ENCODE measurements at regions of chr1 and their contacts with region 1.

Region 1: GRCh38 chr1:67500413-67500959 is 70.3 kb upstream of the SERBP1 start:
- DNase-seq: peak; percentile 55
- ATAC-seq: peak; percentile 100
- H3K4me3 ChIP-seq: no peak overlapping the region
- H3K27ac ChIP-seq: no peak overlapping the region
- H3K4me1 ChIP-seq: peaks cover 3% of the 10 kb centered on the region; the same call in 1 of the 2 replicates
- H3K27me3 ChIP-seq: 0 out of 4 replicates have a peak, but pooled peaks cover 0 to 2% of the 10 kb centered on the region in 2 experiments
- CTCF ChIP-seq: peak; percentile 97 to 99 (median 99); a peak in 5 of 6 replicates
- EP300 ChIP-seq: no peak
- POLR2A ChIP-seq: no peak
- RAD21 ChIP-seq: peak; percentile 100

Region 2: DNA sequence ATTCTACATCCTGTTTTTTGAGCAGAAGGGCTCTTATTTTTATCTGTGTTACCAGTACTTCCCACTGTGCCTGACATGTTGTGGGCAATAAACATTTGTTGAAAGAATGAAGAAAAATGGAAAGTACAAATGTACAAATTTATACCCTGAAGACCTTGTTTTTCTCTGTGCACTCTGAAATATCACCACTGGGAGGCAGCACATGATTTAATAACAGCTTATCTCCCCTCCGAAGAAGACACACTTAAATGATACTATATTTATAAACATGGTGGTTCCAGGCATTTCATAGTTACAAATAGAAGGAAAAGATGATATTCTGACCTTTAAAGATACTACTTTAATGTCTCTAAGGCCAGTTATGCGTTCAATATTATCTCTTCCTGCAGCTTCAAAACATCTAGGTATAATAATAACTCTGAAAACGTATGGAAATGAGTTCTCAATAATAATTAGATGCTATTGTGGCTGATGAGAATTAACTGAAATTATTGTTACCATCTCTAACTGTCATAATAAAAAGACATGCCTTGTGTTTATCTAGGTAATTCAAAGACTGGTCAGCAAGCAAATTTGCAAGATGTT is 735.4 kb before region 1 on chr1:
- CTCF ChIA-PET with region 1: interaction called, 5 read pairs
- POLR2A ChIA-PET with region 1: no interaction called
- RAD21 ChIA-PET with region 1: interaction called, 11 read pairs
- SMC1A ChIA-PET with region 1: interaction called, 3 read pairs
- in situ Hi-C with region 1: loop called (anchors 25 kb)
- intact Hi-C with region 1: loop called (anchors 5 kb)
- DNase-seq: no peak
- ATAC-seq: peak; percentile 80
- H3K4me3 ChIP-seq: no peak overlapping the region
- H3K27ac ChIP-seq: no peak overlapping the region
- H3K4me1 ChIP-seq: no peaks in the 10 kb centered on the region
- H3K27me3 ChIP-seq: no peaks in the 10 kb centered on the region
- CTCF ChIP-seq: peak; percentile 50 to 75 (median 69)
- EP300 ChIP-seq: no peak
- POLR2A ChIP-seq: no peak
- RAD21 ChIP-seq: peak; percentile 85

Region 3: GRCh38 chr1:67005068-67005467 is 495.4 kb before region 1 on chr1:
- CTCF ChIA-PET with region 1: interaction called, 3 read pairs
- POLR2A ChIA-PET with region 1: no interaction called
- RAD21 ChIA-PET with region 1: no interaction called
- SMC1A ChIA-PET with region 1: no interaction called
- in situ Hi-C with region 1: no loop called
- intact Hi-C with region 1: loop called (anchors 5 kb)
- DNase-seq: no peak
- ATAC-seq: no peak
- H3K4me3 ChIP-seq: no peak overlapping the region
- H3K27ac ChIP-seq: no peak overlapping the region
- H3K4me1 ChIP-seq: no peaks in the 10 kb centered on the region
- H3K27me3 ChIP-seq: no peaks in the 10 kb centered on the region
- CTCF ChIP-seq: no peak
- EP300 ChIP-seq: no peak
- POLR2A ChIP-seq: no peak
- RAD21 ChIP-seq: no peak

Region 4: GRCh38 chr1:67239738-67240137 is 260.7 kb before region 1 on chr1:
- CTCF ChIA-PET with region 1: interaction called, 36 read pairs
- POLR2A ChIA-PET with region 1: no interaction called
- RAD21 ChIA-PET with region 1: interaction called, 30 read pairs
- SMC1A ChIA-PET with region 1: interaction called, 17 read pairs
- in situ Hi-C with region 1: no loop called
- intact Hi-C with region 1: loop called (anchors 1 kb)
- DNase-seq: peak; percentile 9
- ATAC-seq: no peak
- H3K4me3 ChIP-seq: no peak overlapping the region
- H3K27ac ChIP-seq: no peak overlapping the region
- H3K4me1 ChIP-seq: no peaks in the 10 kb centered on the region
- H3K27me3 ChIP-seq: no peaks in the 10 kb centered on the region
- CTCF ChIP-seq: no peak
- EP300 ChIP-seq: no peak
- POLR2A ChIP-seq: no peak
- RAD21 ChIP-seq: no peak

Region 5: DNA sequence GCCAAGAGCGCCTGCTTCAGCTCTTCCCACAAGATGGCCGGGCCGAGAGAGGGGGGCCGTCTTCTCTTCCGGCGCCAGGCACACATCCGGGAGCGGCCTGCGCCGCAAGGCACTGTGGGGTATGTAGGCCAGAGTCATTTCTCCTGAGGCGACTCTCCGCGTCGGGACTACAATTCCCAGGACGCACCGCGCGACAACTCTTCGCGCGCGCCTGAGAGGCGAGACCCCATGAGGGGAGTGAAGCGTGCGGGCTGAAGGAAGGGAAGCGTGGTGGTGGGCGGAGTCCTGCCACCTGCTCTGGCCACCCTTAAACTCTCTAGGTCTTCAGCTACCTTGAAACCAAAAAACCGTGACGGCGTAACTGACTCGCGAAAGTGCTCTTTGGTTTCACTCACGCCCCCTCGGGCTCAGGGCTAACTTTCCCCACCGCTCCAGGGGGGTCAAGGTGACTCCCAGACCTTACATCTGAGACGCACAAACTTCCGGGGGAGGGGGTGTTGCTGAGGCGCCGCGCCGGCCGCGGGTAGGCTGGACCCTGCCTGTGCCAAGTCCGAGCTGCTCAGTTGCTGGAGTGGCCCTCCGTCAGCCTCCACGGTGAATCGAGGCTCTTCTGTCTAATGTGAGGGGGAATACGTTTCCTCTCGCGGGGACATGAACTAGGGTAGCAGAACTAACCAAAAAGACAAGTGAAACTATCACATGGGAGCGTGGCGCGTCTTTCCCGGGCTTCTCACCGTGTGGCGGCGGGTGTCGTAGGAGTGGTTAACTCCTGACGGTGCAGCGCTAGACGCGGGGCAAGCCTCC is 69.9 kb before region 1 on chr1 and contains the start of gene SERBP1:
- CTCF ChIA-PET with region 1: interaction called, 11 read pairs
- POLR2A ChIA-PET with region 1: no interaction called
- RAD21 ChIA-PET with region 1: interaction called, 7 read pairs
- SMC1A ChIA-PET with region 1: interaction called, 8 read pairs
- in situ Hi-C with region 1: no loop called
- intact Hi-C with region 1: loop called (anchors 1 kb)
- DNase-seq: peak; percentile 98
- ATAC-seq: peak; percentile 86
- H3K4me3 ChIP-seq: peak within 1 kb of the TSS; percentile 91
- H3K27ac ChIP-seq: peak within 1 kb of the TSS; percentile 96
- H3K4me1 ChIP-seq: peaks cover 15% of the 10 kb centered on the region
- H3K27me3 ChIP-seq: no peaks in the 10 kb centered on the region
- CTCF ChIP-seq: no peak
- EP300 ChIP-seq: peak in 1 of 2 experiments; percentile 50; a peak in 2 of 4 replicates
- POLR2A ChIP-seq: peak; percentile 59
- RAD21 ChIP-seq: no peak
- polyA plus RNA-seq, gene SERBP1: 76.7 to 111 TPM

Region 6: GRCh38 chr1:67441183-67441582 is 59.3 kb before region 1 on chr1:
- CTCF ChIA-PET with region 1: no interaction called
- POLR2A ChIA-PET with region 1: no interaction called
- RAD21 ChIA-PET with region 1: no interaction called
- SMC1A ChIA-PET with region 1: no interaction called
- in situ Hi-C with region 1: no loop called
- intact Hi-C with region 1: no loop called
- DNase-seq: no peak
- ATAC-seq: peak; percentile 24; the same call in 1 of the 3 replicates
- H3K4me3 ChIP-seq: no peak overlapping the region
- H3K27ac ChIP-seq: no peak overlapping the region
- H3K4me1 ChIP-seq: peaks cover 6% of the 10 kb centered on the region; the same call in 1 of the 2 replicates
- H3K27me3 ChIP-seq: no peaks in the 10 kb centered on the region
- CTCF ChIP-seq: no peak
- EP300 ChIP-seq: no peak
- POLR2A ChIP-seq: no peak
- RAD21 ChIP-seq: no peak

Region 7: DNA sequence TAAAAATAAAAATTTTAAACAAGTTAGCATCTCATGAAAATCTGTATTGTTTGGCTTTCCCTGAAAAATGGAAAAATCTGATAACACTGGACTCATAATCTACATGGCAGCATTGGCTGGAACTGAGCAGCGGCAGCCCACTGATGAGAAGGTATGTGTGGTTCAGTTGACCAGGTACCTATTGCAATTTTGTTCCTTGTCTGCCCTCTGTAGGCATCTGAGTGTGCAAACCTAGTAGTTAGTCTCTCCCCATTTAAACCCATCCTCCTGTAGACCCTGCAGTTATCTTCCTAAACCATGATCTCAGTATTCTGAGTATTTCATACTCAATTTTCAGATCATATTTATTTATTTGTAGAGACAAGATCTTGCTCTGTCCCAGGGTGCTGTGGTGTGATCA is 10.8 kb before region 1 on chr1:
- CTCF ChIA-PET with region 1: interaction called, 16 read pairs
- POLR2A ChIA-PET with region 1: no interaction called
- RAD21 ChIA-PET with region 1: interaction called, 12 read pairs
- SMC1A ChIA-PET with region 1: interaction called, 3 read pairs
- in situ Hi-C with region 1: no loop called
- intact Hi-C with region 1: no loop called
- DNase-seq: peak; percentile 0
- ATAC-seq: peak; percentile 81
- H3K4me3 ChIP-seq: no peak overlapping the region
- H3K27ac ChIP-seq: no peak overlapping the region
- H3K4me1 ChIP-seq: no peaks in the 10 kb centered on the region
- H3K27me3 ChIP-seq: no peaks in the 10 kb centered on the region
- CTCF ChIP-seq: peak; percentile 36 to 51 (median 36); a peak in 4 of 6 replicates
- EP300 ChIP-seq: no peak
- POLR2A ChIP-seq: no peak
- RAD21 ChIP-seq: peak; percentile 58

Region 8: GRCh38 chr1:67635055-67635809 is 134.7 kb after region 1 on chr1:
- CTCF ChIA-PET with region 1: no interaction called
- POLR2A ChIA-PET with region 1: no interaction called
- RAD21 ChIA-PET with region 1: no interaction called
- SMC1A ChIA-PET with region 1: no interaction called
- in situ Hi-C with region 1: no loop called
- intact Hi-C with region 1: no loop called
- DNase-seq: no peak
- ATAC-seq: no peak
- H3K4me3 ChIP-seq: no peak overlapping the region
- H3K27ac ChIP-seq: no peak overlapping the region
- H3K4me1 ChIP-seq: no peaks in the 10 kb centered on the region
- H3K27me3 ChIP-seq: peaks cover 0 to 2% of the 10 kb centered on the region in 2 experiments; a peak in 1 of 4 replicates
- CTCF ChIP-seq: no peak
- EP300 ChIP-seq: no peak
- POLR2A ChIP-seq: no peak
- RAD21 ChIP-seq: no peak

Region 9: DNA sequence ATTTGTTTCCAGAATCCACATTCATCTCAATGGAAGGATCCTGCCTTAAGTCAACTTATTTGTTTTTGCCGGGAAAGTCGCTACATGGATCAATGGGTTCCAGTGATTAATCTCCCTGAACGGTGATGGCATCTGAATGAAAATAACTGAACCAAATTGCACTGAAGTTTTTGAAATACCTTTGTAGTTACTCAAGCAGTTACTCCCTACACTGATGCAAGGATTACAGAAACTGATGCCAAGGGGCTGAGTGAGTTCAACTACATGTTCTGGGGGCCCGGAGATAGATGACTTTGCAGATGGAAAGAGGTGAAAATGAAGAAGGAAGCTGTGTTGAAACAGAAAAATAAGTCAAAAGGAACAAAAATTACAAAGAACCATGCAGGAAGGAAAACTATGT is 187.2 kb after region 1 on chr1:
- CTCF ChIA-PET with region 1: no interaction called
- POLR2A ChIA-PET with region 1: no interaction called
- RAD21 ChIA-PET with region 1: no interaction called
- SMC1A ChIA-PET with region 1: no interaction called
- in situ Hi-C with region 1: no loop called
- intact Hi-C with region 1: no loop called
- DNase-seq: no peak
- ATAC-seq: no peak
- H3K4me3 ChIP-seq: peak overlapping the region; percentile 81; the same call in 1 of the 2 replicates
- H3K27ac ChIP-seq: no peak overlapping the region
- H3K4me1 ChIP-seq: peaks cover 8% of the 10 kb centered on the region
- H3K27me3 ChIP-seq: peaks cover 0 to 2% of the 10 kb centered on the region in 2 experiments; a peak in 2 of 4 replicates
- CTCF ChIP-seq: no peak
- EP300 ChIP-seq: no peak
- POLR2A ChIP-seq: no peak
- RAD21 ChIP-seq: no peak

Region 10: GRCh38 chr1:67748630-67749029 is 248.1 kb after region 1 on chr1:
- CTCF ChIA-PET with region 1: no interaction called
- POLR2A ChIA-PET with region 1: no interaction called
- RAD21 ChIA-PET with region 1: no interaction called
- SMC1A ChIA-PET with region 1: no interaction called
- in situ Hi-C with region 1: no loop called
- intact Hi-C with region 1: no loop called
- DNase-seq: peak; percentile 47
- ATAC-seq: peak; percentile 88
- H3K4me3 ChIP-seq: 0 out of 2 replicates have a peak overlapping the region, but pooled peaks have one; percentile 0
- H3K27ac ChIP-seq: no peak overlapping the region
- H3K4me1 ChIP-seq: peaks cover 12% of the 10 kb centered on the region
- H3K27me3 ChIP-seq: no peaks in the 10 kb centered on the region
- CTCF ChIP-seq: no peak
- EP300 ChIP-seq: no peak
- POLR2A ChIP-seq: no peak
- RAD21 ChIP-seq: no peak